CD4-positive, alpha-beta T cell (primary cell): ENCODE measurements at regions of chr19 and their contacts with region 1.

Region 1: GRCh38 chr19:4123615-4124568 is at the start of gene MAP2K2:
- DNase-seq: peak; percentile 92 to 99 (median 96)
- ATAC-seq: peak; percentile 97
- H3K4me3 ChIP-seq: peak within 1 kb of the TSS; percentile 59
- H3K4me3 Mint-ChIP-seq: peak within 1 kb of the TSS; percentile 93
- H3K27ac ChIP-seq: peak within 1 kb of the TSS; percentile 44 to 53
- H3K27ac Mint-ChIP-seq: peak within 1 kb of the TSS; percentile 89
- H3K4me1 ChIP-seq: peaks cover 32% of the 10 kb centered on the region
- H3K4me1 Mint-ChIP-seq: peaks cover 26% of the 10 kb centered on the region
- H3K27me3 ChIP-seq: no peaks in the 10 kb centered on the region
- H3K27me3 Mint-ChIP-seq: no peaks in the 10 kb centered on the region
- CTCF ChIP-seq: no peak
- total RNA-seq, gene MAP2K2: 72.7 to 77.6 TPM

Region 2: DNA sequence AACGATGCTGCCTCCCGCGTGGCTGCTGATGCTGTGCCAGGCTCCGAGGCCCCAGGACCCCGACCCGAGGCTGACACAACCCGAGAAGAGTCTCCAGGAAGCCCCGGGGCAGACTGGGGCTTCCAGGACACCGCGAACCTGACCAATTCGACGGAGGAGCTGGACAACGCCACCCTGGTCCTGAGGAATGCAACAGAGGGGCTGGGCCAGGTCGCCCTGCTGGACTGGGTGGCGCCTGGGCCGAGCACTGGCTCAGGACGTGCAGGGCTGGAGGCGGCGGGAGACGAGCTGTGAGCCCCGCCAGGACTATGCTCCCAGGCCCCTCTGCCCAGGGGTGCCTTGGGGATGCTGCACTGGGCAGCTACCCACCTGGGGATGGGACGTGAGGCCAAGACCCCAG is 47.8 kb after region 1 on chr19:
- CTCF ChIA-PET with region 1: no interaction called
- POLR2A ChIA-PET with region 1: no interaction called
- intact Hi-C with region 1: no loop called
- DNase-seq: no peak
- ATAC-seq: no peak
- H3K4me3 ChIP-seq: no peak overlapping the region
- H3K4me3 Mint-ChIP-seq: no peak overlapping the region
- H3K27ac ChIP-seq: no peak overlapping the region
- H3K27ac Mint-ChIP-seq: no peak overlapping the region
- H3K4me1 ChIP-seq: peaks cover 9% of the 10 kb centered on the region
- H3K4me1 Mint-ChIP-seq: no peaks in the 10 kb centered on the region
- H3K27me3 ChIP-seq: peaks cover 7 to 17% of the 10 kb centered on the region in 2 experiments
- H3K27me3 Mint-ChIP-seq: peaks cover 29% of the 10 kb centered on the region
- CTCF ChIP-seq: no peak

Region 3: GRCh38 chr19:4182084-4182810 is 58.4 kb after region 1 on chr19 and contains the starts of genes ANKRD24 and SIRT6:
- CTCF ChIA-PET with region 1: no interaction called
- POLR2A ChIA-PET with region 1: no interaction called
- intact Hi-C with region 1: loop called in 1 of 2 experiments (anchors 5 kb)
- DNase-seq: peak; percentile 90 to 98 (median 96)
- ATAC-seq: peak; percentile 80
- H3K4me3 ChIP-seq: peak within 1 kb of the TSS; percentile 96
- H3K4me3 Mint-ChIP-seq: peak within 1 kb of the TSS; percentile 99
- H3K27ac ChIP-seq: peak within 1 kb of the TSS; percentile 66 to 80
- H3K27ac Mint-ChIP-seq: peak within 1 kb of the TSS; percentile 96
- H3K4me1 ChIP-seq: peaks cover 47% of the 10 kb centered on the region
- H3K4me1 Mint-ChIP-seq: peaks cover 32% of the 10 kb centered on the region
- H3K27me3 ChIP-seq: no peaks in the 10 kb centered on the region
- H3K27me3 Mint-ChIP-seq: peaks cover 3% of the 10 kb centered on the region
- CTCF ChIP-seq: no peak
- total RNA-seq, gene ANKRD24: 0.59 to 0.60 TPM
- total RNA-seq, gene SIRT6: 11.2 to 14.2 TPM